WTC11 (cell line): ENCODE measurements at regions of chr11 and their contacts with region 1.

Region 1: GRCh38 chr11:66677599-66678375 is at the start of gene RBM4B:
- DNase-seq: peak; percentile 98
- ATAC-seq: peak; percentile 95
- H3K4me3 Mint-ChIP-seq: peak within 1 kb of the TSS; percentile 89
- H3K27ac Mint-ChIP-seq: peak within 1 kb of the TSS; percentile 100
- H3K4me1 Mint-ChIP-seq: peaks cover 29% of the 10 kb centered on the region
- H3K27me3 Mint-ChIP-seq: no peaks in the 10 kb centered on the region
- CTCF ChIP-seq: no peak
- total RNA-seq, gene RBM4B: 14.1 to 21.3 TPM (median 20.3 TPM) in 3 replicates

Region 2: GRCh38 chr11:66408488-66409214 is 269.1 kb before region 1 on chr11:
- CTCF ChIA-PET with region 1: interaction called, 28 read pairs
- POLR2A ChIA-PET with region 1: interaction called, 3 read pairs
- DNase-seq: peak; percentile 97
- ATAC-seq: peak; percentile 76
- H3K4me3 Mint-ChIP-seq: peak overlapping the region; percentile 66
- H3K27ac Mint-ChIP-seq: no peak overlapping the region
- H3K4me1 Mint-ChIP-seq: peaks cover 10% of the 10 kb centered on the region
- H3K27me3 Mint-ChIP-seq: peaks cover 34% of the 10 kb centered on the region
- CTCF ChIP-seq: peak; percentile 99

Region 3: GRCh38 chr11:66438504-66439466 is 239.0 kb before region 1 on chr11 and contains the start of gene MRPL11:
- CTCF ChIA-PET with region 1: interaction called, 26 read pairs
- POLR2A ChIA-PET with region 1: no interaction called
- DNase-seq: peak; percentile 95
- ATAC-seq: peak; percentile 98
- H3K4me3 Mint-ChIP-seq: peak within 1 kb of the TSS; percentile 95
- H3K27ac Mint-ChIP-seq: peak within 1 kb of the TSS; percentile 99
- H3K4me1 Mint-ChIP-seq: peaks cover 10% of the 10 kb centered on the region
- H3K27me3 Mint-ChIP-seq: peaks cover 7% of the 10 kb centered on the region
- CTCF ChIP-seq: no peak; the same call in 1 of the 2 replicates
- total RNA-seq, gene MRPL11: 131 to 137 TPM (median 135 TPM) in 3 replicates

Region 4: DNA sequence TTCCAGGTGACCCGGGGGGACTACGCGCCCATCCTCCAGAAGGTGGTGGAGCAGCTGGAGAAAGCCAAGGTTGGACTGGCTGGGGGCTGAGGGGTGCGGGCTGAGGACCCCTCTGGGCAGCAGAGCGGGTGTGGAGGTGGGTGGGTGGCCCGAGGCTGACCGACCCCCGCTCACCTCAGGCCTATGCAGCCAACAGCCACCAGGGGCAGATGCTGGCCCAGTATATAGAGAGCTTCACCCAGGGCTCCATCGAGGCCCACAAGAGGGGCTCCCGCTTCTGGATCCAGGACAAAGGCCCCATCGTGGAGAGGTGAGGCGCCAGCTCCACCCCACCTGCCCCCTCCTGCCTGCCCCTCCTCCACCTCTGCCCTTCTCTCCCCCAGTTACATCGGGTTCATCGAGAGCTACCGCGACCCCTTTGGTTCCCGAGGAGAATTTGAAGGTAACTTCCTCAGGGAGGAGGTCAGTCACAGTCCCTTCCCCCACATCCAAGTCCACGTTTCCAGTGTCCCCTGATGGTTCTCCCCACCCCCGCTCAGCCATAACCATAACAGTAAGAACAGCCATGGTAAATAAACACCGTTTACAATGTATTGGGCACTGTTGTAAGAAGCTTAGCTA is 186.4 kb before region 1 on chr11:
- CTCF ChIA-PET with region 1: interaction called, 47 read pairs
- POLR2A ChIA-PET with region 1: no interaction called
- DNase-seq: peak; percentile 74
- ATAC-seq: peak; percentile 96
- H3K4me3 Mint-ChIP-seq: no peak overlapping the region
- H3K27ac Mint-ChIP-seq: 0 out of 2 replicates have a peak overlapping the region, but pooled peaks have one; percentile 15
- H3K4me1 Mint-ChIP-seq: peaks cover 6% of the 10 kb centered on the region
- H3K27me3 Mint-ChIP-seq: no peaks in the 10 kb centered on the region
- CTCF ChIP-seq: peak; percentile 75

Region 5: DNA sequence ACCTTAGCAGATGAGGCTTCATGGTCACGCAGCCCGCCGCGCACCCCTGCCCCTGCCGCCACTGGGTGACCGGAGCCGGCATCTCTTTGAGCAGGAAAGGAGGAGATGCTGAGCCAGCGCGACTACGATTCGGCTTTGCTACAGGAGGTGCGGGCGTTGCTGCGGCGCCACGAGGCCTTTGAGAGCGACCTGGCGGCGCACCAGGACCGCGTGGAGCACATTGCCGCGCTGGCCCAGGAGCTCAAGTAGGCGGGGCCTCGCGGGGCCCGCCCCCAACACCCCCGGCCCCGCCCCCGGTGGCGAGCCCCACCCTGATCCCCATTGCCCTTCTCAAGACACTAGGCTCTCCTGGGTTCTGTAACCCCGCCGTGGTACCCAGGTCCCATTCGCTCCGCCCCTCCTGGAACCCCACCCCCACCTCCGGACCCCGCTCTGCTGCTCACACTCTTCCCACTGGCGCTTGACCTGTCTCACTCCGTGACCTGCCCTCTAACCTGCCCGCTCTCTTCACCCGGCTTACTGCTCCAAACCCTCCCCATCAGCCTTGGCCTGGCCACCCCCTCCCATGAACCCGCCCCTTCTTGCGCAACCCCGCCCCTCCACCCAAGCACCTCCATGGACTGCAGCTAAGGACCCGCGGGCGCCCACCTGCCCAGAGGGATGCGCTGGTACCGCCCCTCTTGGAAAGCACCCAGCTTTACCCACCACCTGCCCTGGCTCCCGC is 118.5 kb before region 1 on chr11:
- CTCF ChIA-PET with region 1: interaction called, 11 read pairs
- POLR2A ChIA-PET with region 1: no interaction called
- DNase-seq: peak; percentile 55
- ATAC-seq: peak; percentile 81
- H3K4me3 Mint-ChIP-seq: peak overlapping the region; percentile 29; the same call in 1 of the 2 replicates
- H3K27ac Mint-ChIP-seq: no peak overlapping the region
- H3K4me1 Mint-ChIP-seq: no peaks in the 10 kb centered on the region
- H3K27me3 Mint-ChIP-seq: peaks cover 6% of the 10 kb centered on the region
- CTCF ChIP-seq: no peak

Region 6: GRCh38 chr11:66592457-66593302 is 85.1 kb before region 1 on chr11 and contains the starts of genes CCDC87 and CCS:
- CTCF ChIA-PET with region 1: interaction called, 17 read pairs
- POLR2A ChIA-PET with region 1: interaction called, 11 read pairs
- DNase-seq: peak; percentile 97
- ATAC-seq: peak; percentile 94
- H3K4me3 Mint-ChIP-seq: peak within 1 kb of the TSS; percentile 97
- H3K27ac Mint-ChIP-seq: peak within 1 kb of the TSS; percentile 99
- H3K4me1 Mint-ChIP-seq: peaks cover 11% of the 10 kb centered on the region
- H3K27me3 Mint-ChIP-seq: peaks cover 39% of the 10 kb centered on the region
- CTCF ChIP-seq: peak; percentile 32
- total RNA-seq, gene CCDC87: 0.71 to 0.85 TPM (median 0.80 TPM) in 3 replicates
- total RNA-seq, gene CCS: 35.9 to 47.3 TPM (median 41.7 TPM) in 3 replicates

Region 7: DNA sequence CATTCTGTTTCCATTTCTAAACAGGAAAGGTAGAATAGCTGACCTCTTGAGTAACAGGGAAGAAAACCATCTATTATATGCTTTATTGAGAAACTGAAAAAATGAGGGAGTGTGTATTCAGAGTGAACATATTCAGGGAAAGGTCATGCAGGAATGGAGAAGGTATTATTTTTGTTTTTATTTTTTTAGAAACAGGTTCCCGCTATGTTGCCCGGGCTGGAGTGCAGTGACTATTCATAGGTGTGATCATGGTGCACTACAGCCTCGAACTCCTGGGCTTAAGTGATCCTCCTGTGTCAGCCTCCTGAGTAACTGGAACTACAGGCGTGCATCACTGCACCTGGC is 156.7 kb after region 1 on chr11:
- CTCF ChIA-PET with region 1: interaction called, 16 read pairs
- POLR2A ChIA-PET with region 1: no interaction called
- DNase-seq: no peak
- ATAC-seq: no peak
- H3K4me3 Mint-ChIP-seq: no peak overlapping the region
- H3K27ac Mint-ChIP-seq: no peak overlapping the region; the same call in 1 of the 2 replicates
- H3K4me1 Mint-ChIP-seq: peaks cover 2% of the 10 kb centered on the region
- H3K27me3 Mint-ChIP-seq: no peaks in the 10 kb centered on the region
- CTCF ChIP-seq: no peak; the same call in none of the 2 replicates